Calu3 (cell line): ENCODE measurements at regions of chr7 and their contacts with region 1.

Region 1: GRCh38 chr7:43582503-43583423 is at the start of gene STK17A:
- DNase-seq: peak; percentile 98
- H3K4me3 Mint-ChIP-seq: peak within 1 kb of the TSS; percentile 92
- H3K27ac Mint-ChIP-seq: peak within 1 kb of the TSS; percentile 86
- H3K4me1 Mint-ChIP-seq: peaks cover 14% of the 10 kb centered on the region
- H3K27me3 Mint-ChIP-seq: no peaks in the 10 kb centered on the region
- CTCF ChIP-seq: peak; percentile 99
- total RNA-seq, gene STK17A: 35.9 and 53.5 TPM in 2 replicates

Region 2: DNA sequence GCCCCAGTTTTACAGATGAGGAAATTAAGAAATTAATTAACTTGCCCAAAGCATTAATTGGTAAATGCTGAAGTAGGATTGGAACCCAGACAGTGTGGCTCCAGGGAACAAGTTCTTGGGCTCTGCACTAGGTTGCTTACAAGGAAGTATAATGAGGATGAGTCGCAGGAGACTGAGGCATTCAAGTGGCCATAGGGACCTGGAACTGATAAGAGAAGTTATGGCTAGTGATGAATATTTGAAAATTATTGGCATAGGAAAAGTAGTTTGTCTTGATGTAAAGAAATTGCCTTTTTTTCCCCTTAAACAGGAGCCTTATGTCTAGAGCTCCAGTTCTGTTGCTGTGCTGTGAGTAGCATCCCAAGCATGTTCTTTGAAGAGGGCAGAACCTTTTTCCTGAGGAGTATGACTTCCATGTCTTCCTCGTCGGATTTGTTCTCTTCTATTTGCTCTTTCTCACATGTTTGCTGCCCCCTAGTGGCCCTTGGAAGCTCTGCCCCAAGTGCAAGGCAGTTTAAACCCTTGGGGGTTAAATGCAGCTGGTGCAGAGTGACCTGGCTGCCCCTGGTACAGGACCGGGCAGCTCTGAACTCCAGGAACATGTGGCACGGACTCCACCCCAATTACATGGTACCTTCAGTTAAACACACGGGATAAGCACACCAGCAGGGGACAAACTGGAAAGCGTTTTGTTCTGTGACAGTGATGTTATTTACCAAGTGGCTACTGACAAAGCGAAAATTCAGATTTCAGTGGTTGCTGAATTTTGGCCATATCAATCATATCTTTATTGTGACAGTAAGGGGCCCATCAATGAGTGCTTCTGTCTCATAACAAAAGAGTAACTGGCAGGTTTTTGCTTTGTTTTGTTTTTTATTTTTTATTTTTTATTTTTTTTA is 321.5 kb before region 1 on chr7:
- CTCF ChIA-PET with region 1: interaction called, 12 read pairs
- intact Hi-C with region 1: no loop called
- DNase-seq: peak; percentile 86
- H3K4me3 Mint-ChIP-seq: no peak overlapping the region
- H3K27ac Mint-ChIP-seq: no peak overlapping the region
- H3K4me1 Mint-ChIP-seq: no peaks in the 10 kb centered on the region
- H3K27me3 Mint-ChIP-seq: no peaks in the 10 kb centered on the region
- CTCF ChIP-seq: peak; percentile 95

Region 3: GRCh38 chr7:43484678-43485395 is 97.9 kb before region 1 on chr7:
- CTCF ChIA-PET with region 1: interaction called, 18 read pairs
- intact Hi-C with region 1: loop called (anchors 1 kb)
- DNase-seq: no peak
- H3K4me3 Mint-ChIP-seq: no peak overlapping the region
- H3K27ac Mint-ChIP-seq: peak overlapping the region; percentile 6
- H3K4me1 Mint-ChIP-seq: peaks cover 87% of the 10 kb centered on the region
- H3K27me3 Mint-ChIP-seq: no peaks in the 10 kb centered on the region
- CTCF ChIP-seq: no peak

Region 4: DNA sequence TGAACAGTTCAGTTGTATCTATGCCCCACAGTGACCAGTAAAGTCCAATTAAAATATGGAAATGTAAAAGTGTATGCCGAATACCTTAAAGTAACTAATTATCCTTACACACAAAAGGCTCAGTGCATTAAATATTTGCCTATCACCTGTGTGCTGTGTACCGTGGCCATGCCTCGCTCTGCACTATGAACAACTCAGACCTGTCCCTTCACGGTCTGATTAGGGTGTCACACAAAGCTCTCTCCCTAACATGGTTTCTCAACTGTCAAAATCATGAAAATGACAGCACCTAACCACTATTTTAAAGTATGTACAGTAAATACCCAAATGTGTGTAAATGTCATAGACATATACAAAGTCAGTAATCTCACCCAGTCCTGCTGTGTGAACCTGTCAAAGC is 43.2 kb after region 1 on chr7:
- CTCF ChIA-PET with region 1: interaction called, 21 read pairs
- intact Hi-C with region 1: loop called (anchors 2 kb)
- DNase-seq: no peak
- H3K4me3 Mint-ChIP-seq: no peak overlapping the region
- H3K27ac Mint-ChIP-seq: peak overlapping the region; percentile 13
- H3K4me1 Mint-ChIP-seq: no peaks in the 10 kb centered on the region
- H3K27me3 Mint-ChIP-seq: no peaks in the 10 kb centered on the region
- CTCF ChIP-seq: no peak

Region 5: DNA sequence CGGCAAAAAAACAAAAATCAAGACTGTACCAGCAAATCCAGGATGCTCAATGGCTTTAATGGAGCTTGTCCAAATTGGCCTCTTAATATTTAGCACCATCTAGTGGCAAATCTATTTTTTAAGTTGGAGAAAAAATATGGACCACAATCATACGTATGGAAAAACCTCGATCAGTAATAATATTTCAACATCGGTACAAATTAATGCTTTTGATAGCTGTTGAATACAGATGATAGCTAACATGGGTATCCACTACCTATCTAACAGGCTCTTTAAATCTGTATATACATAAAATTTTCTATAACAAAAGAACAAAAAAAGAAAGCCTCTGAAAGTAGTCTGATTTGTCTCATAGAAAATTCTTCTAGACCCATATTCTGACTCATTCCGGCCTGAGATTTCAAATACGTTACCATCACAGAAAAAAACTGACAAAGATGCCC is 117.3 kb after region 1 on chr7:
- CTCF ChIA-PET with region 1: interaction called, 201 read pairs
- intact Hi-C with region 1: loop called (anchors 1 kb)
- DNase-seq: no peak
- H3K4me3 Mint-ChIP-seq: no peak overlapping the region
- H3K27ac Mint-ChIP-seq: no peak overlapping the region
- H3K4me1 Mint-ChIP-seq: no peaks in the 10 kb centered on the region
- H3K27me3 Mint-ChIP-seq: no peaks in the 10 kb centered on the region
- CTCF ChIP-seq: peak; percentile 75

Region 6: DNA sequence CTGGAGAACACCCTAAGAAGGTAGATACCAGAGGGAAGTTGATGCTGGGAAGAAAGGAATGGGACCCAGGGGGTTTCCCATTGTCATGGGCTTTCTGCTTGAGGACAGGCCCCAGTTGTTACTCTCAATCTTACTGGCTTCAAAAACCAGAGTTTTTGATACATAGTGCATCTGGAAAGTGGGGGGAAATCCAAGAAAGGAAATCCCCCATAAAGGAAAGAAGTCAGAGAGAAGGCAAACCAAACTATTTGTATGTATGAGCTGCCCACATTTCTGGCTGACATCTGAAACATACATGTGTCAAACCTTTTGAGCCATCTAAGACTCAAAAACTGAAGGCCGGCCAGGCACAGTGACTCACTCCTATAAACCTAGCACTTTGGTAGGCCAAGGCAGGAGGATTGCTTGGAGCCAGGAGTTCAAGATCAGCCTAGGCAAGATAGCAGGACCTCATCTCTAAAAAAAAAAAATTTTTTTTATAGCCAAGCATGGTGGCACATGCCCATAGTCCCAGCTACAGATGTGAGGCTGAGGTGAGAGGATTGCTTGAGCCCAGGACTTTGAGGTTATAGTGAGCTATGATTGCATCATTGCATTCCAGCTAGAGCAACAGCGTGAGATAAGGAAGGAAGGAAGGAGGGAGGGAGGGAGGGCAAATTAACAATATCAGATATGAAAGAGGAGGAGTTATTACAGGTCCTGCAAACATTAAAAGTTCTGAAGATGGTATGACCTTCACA is 153.2 kb after region 1 on chr7:
- CTCF ChIA-PET with region 1: no interaction called
- intact Hi-C with region 1: no loop called
- DNase-seq: no peak
- H3K4me3 Mint-ChIP-seq: no peak overlapping the region
- H3K27ac Mint-ChIP-seq: peak overlapping the region; percentile 40
- H3K4me1 Mint-ChIP-seq: peaks cover 18% of the 10 kb centered on the region
- H3K27me3 Mint-ChIP-seq: no peaks in the 10 kb centered on the region
- CTCF ChIP-seq: no peak

Region 7: GRCh38 chr7:43834463-43835251 is 251.9 kb after region 1 on chr7:
- CTCF ChIA-PET with region 1: interaction called, 16 read pairs
- intact Hi-C with region 1: loop called (anchors 2 kb)
- DNase-seq: no peak
- H3K4me3 Mint-ChIP-seq: peak overlapping the region; percentile 15
- H3K27ac Mint-ChIP-seq: peak overlapping the region; percentile 40
- H3K4me1 Mint-ChIP-seq: peaks cover 27% of the 10 kb centered on the region
- H3K27me3 Mint-ChIP-seq: no peaks in the 10 kb centered on the region
- CTCF ChIP-seq: no peak